Tibial artery (tissue), 4 donors: ENCODE measurements at regions of chr4 and their contacts with region 1.

Region 1: GRCh38 chr4:85168234-85168834 is 201.8 kb upstream of the WDFY3 start:
- DNase-seq: no peak
- H3K4me3 ChIP-seq: no peak overlapping the region
- H3K27ac ChIP-seq: no peak overlapping the region
- H3K4me1 ChIP-seq: no peaks in the 10 kb centered on the region
- H3K27me3 ChIP-seq: no peaks in the 10 kb centered on the region
- CTCF ChIP-seq: no peak

Region 2: GRCh38 chr4:85127653-85128052 is 40.7 kb before region 1 on chr4:
- intact Hi-C with region 1: loop called (anchors 1 kb)
- DNase-seq: no peak
- H3K4me3 ChIP-seq: no peak overlapping the region
- H3K27ac ChIP-seq: no peak overlapping the region
- H3K4me1 ChIP-seq: no peaks in the 10 kb centered on the region
- H3K27me3 ChIP-seq: no peaks in the 10 kb centered on the region
- CTCF ChIP-seq: peak in 1 of 2 experiments; percentile 18

Region 3: DNA sequence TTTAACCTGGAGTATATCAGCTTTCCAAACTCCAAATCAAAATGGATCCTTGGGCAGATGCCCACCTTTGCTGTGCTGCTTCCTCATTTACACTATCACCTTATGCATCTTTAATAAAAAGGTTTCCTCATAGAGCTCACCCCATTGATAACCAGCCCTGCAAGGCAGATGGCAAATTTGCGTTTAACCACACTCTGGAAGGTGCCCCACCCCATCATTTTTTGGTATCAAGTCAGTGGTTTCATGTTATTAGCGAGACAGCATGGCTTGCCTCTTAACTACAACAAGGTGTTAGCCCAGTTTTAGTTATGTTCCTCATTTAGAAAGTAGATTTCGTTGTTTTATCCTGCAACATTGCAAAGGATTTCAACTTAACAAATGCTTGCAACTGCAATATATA is 12.2 kb after region 1 on chr4:
- intact Hi-C with region 1: no loop called
- DNase-seq: no peak
- H3K4me3 ChIP-seq: no peak overlapping the region
- H3K27ac ChIP-seq: no peak overlapping the region
- H3K4me1 ChIP-seq: no peaks in the 10 kb centered on the region
- H3K27me3 ChIP-seq: no peaks in the 10 kb centered on the region
- CTCF ChIP-seq: no peak